Right cardiac atrium (tissue), 5 donors: ENCODE measurements at regions of chr6 and their contacts with region 1.

Region 1: GRCh38 chr6:108526739-108527174 is 34.0 kb upstream of the FOXO3 start:
- DNase-seq: no peak
- ATAC-seq: peak; percentile 47 to 56
- H3K4me3 ChIP-seq: no peak overlapping the region
- H3K27ac ChIP-seq: no peak overlapping the region
- H3K4me1 ChIP-seq: peaks cover 3% of the 10 kb centered on the region
- H3K27me3 ChIP-seq: no peaks in the 10 kb centered on the region

Region 2: DNA sequence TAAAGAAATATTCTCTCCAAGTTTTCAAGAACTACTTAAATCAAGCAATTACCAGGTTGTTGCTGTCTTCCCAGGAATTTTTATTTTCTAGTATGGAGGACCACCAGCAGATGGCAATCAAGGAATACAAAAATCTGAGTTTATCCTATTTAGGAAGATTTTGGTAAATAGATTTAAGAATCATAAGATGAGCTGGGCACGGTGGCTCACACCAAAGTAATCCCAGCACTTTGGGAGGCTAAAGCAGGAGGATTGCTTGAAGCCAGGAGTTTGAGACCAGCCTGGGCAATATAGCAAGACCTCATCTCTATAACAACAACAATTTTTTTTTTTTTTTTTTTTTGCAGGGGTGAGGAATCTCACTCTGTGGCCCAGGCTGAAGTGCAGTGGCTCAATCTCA is 549.5 kb before region 1 on chr6:
- intact Hi-C with region 1: loop called (anchors 5 to 10 kb)
- DNase-seq: no peak
- ATAC-seq: no peak
- H3K4me3 ChIP-seq: no peak overlapping the region
- H3K27ac ChIP-seq: no peak overlapping the region
- H3K4me1 ChIP-seq: no peaks in the 10 kb centered on the region
- H3K27me3 ChIP-seq: no peaks in the 10 kb centered on the region

Region 3: GRCh38 chr6:107982486-107982885 is 544.3 kb before region 1 on chr6:
- intact Hi-C with region 1: loop called (anchors 5 to 10 kb)
- DNase-seq: no peak
- ATAC-seq: no peak
- H3K4me3 ChIP-seq: no peak overlapping the region
- H3K27ac ChIP-seq: no peak overlapping the region
- H3K4me1 ChIP-seq: no peaks in the 10 kb centered on the region
- H3K27me3 ChIP-seq: no peaks in the 10 kb centered on the region

Region 4: DNA sequence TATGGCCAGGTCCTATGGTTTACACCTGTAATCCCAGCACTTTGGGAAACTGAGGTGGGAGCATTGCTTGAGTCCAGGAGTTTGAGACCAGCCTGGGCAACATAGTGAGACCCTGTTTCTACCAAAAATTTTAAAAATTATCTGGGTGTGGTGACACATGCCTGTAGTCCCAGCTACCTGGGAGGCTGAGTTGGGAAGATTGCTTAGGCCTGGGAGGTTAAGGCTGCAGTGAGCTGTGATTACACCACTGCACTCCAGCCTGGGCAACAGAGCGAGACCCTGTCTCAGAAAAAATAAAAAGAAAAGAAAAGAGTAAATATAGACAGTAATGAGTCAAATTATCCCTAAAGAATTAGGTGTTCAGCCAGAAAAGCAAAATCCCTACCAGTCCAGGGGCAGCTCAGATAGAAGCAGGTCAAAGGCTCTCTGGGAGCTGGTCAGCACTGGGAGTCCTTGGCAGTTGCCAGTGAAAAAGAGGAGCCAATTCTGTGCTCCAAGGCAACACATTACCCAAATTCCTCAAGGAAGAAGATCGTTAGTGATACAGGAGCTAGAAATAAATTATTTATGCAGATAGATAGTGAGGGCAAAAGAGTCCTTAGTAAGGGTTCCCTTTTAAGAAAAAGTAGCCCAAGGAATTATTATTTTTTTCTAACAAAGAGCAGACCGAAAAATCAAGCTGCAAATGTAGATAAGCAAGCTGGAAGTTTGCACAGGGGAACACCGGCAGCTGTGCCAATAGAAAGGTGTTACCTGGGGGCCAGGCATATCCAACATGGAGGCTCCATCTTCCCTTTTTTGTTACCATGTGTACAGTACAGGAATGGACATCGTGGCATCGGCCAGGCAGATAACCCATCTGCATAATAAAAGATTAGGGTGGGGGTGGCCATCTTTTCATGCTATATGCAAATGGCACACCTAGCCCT is 537.3 kb before region 1 on chr6:
- intact Hi-C with region 1: loop called in 3 of 4 experiments (anchors 5 to 10 kb)
- DNase-seq: no peak
- ATAC-seq: no peak
- H3K4me3 ChIP-seq: no peak overlapping the region
- H3K27ac ChIP-seq: no peak overlapping the region
- H3K4me1 ChIP-seq: no peaks in the 10 kb centered on the region
- H3K27me3 ChIP-seq: no peaks in the 10 kb centered on the region

Region 5: DNA sequence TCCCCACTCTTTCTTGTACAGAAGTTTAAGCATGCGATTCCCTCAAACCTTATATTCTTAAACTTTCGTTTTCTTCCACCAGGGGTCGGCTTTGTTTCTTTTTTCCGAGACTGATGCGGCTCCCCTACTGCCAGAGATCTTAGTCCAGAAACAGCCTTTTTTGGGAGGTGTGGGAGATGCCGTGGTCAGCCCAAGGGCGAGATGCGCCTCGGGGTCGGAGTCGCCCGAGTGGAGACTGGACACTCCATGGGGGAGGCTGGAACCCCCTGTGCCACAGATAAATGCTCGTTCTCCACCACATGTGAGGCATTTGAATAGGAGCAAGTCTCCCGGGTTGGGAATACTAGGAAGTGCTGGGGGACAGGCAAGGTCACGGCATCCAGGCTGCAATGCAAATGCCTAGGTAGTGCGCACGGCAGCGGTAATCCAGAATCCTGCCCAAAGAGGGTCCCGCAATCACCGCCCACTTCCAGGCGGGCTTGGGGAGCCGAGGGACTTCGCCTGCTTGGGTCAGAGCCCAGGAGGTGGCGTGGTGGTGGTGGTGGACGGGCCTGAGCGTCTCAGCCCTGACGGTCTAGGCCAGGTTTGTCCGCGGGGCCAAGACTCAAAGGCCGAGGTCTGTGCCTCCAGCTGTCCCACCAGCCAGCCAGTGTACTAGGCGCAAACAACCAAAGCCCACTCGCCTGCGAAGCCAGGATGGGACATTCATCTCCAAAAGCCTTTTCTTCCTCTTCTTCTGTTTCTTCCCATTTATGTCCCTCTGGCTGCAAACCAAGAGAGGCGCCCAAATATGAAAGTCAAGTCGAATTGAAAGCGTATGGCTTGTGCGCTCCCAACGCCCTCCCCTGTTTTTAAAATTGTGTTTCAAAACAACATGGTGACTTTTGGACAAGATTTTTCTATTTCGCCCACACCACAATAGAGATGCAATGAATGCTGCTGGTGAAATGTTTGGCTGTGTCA is 412.9 kb before region 1 on chr6:
- intact Hi-C with region 1: loop called (anchors 2 to 10 kb)
- DNase-seq: peak in 2 of 3 donors; percentile 20 to 56
- ATAC-seq: peak; percentile 18 to 37
- H3K4me3 ChIP-seq: peak overlapping the region; percentile 18
- H3K27ac ChIP-seq: no peak overlapping the region
- H3K4me1 ChIP-seq: peaks cover 2% of the 10 kb centered on the region
- H3K27me3 ChIP-seq: no peaks in the 10 kb centered on the region

Region 6: DNA sequence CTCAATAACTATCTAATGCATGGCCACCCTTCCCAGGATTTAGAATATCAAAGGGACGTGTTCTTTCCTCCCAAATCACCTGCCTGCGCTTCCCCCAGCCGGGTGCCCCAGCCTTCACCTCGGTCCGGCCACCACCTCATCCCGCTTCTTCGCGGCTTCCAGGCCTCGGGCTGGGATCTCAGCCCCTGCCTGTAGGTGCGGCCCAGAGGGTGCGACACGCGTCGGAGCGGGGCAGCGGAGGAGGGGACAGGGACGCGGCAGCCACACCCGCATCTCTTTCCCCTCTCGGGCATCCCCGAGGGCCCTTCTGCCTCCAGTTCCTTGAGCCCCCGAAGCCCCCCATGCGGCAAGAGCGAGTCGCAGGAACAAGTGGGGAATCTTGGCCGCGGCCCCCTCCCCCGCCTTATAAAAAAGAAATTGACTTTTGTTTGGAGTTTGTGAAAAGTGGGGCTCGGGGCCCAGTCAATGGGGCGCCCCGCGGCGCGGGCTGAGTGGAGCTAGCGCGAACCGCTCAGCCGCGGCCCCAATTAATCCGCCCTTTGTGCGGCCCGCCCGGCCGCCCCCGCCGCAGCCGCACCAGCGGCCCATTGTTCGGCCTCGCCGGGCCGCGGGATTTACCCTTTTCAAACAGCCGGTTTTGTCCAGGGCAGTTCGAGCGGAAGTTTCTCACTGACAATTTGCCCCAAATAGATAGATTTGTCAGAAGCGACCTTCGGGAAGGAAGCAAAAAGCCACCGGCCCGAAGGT is 369.4 kb before region 1 on chr6:
- intact Hi-C with region 1: no loop called
- DNase-seq: no peak
- ATAC-seq: peak in 1 of 2 donors; percentile 43
- H3K4me3 ChIP-seq: peak overlapping the region; percentile 42
- H3K27ac ChIP-seq: no peak overlapping the region
- H3K4me1 ChIP-seq: peaks cover 3% of the 10 kb centered on the region
- H3K27me3 ChIP-seq: peaks cover 2% of the 10 kb centered on the region

Region 7: DNA sequence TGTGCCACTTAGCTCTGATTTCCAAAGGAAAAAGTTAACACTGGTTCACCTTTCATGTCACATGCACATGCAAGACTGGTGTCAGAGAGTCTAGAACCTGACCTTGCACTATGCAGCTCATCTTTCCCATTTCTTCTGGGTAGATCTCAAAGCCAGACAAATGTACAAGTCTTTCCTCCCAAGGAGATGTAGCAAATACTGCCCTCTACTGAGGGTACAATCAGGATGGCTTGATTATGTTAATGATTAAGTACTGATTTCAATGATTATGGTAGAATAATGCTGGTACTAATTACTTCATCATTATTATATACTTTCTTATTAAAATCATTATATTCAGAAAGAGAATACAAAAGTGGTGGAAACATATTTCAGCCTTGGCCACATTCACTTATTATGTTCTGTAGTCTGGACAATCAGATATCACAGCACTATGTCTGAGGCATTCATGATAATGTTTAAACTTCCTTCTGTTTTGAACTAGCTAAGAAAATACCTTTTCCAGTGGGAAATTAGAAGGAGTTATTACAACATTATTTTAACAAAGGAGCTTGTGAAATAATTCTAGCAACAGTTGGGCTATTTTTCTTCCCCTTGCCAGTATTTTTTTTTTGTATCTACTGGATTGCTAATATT is 34.5 kb before region 1 on chr6:
- intact Hi-C with region 1: no loop called
- DNase-seq: no peak
- ATAC-seq: no peak
- H3K4me3 ChIP-seq: no peak overlapping the region
- H3K27ac ChIP-seq: no peak overlapping the region
- H3K4me1 ChIP-seq: no peaks in the 10 kb centered on the region
- H3K27me3 ChIP-seq: no peaks in the 10 kb centered on the region